Activated T-helper 1 cell treated with anti-CD3 and anti-CD28 coated beads, Interleukin-12 subunit alpha, Interleukin-12 subunit beta, Interleukin-2, Interleukin-4 antibody, amounts not matched to agents 30 ng/mL and 10 ng/mL and 1 ng/mL, durations not matched to agents 14 hours and 24 hours and 36 hours (primary cell): ENCODE measurements at regions of chr3 and their contacts with region 1.

Region 1: GRCh38 chr3:48716982-48717746 is at the start of gene IP6K2:
- DNase-seq: peak; percentile 98
- H3K4me3 Mint-ChIP-seq: peak within 1 kb of the TSS; percentile 98
- H3K27ac Mint-ChIP-seq: peak within 1 kb of the TSS; percentile 94
- H3K4me1 Mint-ChIP-seq: peaks cover 29% of the 10 kb centered on the region
- H3K27me3 Mint-ChIP-seq: peaks cover 17% of the 10 kb centered on the region
- total RNA-seq, gene IP6K2: 59.9 and 61.0 TPM in 2 replicates

Region 2: DNA sequence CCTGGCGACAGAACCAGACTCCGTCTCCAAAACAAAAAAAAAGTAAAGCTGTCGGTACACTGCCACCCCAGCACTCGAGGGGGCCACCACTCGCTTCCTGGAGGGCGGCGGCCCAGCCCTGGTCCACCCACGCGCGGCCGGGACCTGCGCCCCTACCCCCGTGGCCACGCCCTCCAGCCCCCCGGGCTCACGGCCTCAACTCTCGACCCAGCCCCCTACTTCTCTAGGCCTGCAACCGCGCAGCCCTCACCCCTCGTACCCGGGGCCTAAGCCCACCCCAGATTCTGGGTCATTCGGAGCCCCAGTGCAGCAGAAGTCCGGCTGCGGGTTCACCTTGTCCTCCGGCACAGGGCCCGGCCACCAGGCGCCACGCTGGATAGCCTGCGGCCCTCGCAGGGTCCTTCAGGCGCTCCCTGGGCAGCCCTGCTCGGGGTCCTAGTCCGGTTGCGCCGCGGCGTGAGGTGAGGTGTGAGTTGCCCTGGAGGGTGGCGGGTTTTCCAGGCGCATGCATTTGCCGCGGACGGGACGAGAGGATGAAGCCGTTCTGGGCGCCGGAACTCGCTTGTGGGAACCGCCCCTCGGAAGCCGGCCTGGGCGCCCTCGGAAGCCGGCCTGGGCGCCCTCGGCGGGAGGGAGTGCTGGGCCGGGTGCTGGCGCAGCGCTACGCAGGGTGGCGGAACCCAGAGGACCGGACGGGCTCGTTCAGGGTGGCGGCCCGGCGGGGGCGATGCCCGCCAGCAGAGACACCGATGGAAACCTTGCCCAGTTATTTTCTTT is 416.0 kb before region 1 on chr3:
- intact Hi-C with region 1: loop called (anchors 1 kb)
- DNase-seq: peak; percentile 87
- H3K4me3 Mint-ChIP-seq: peak within 1 kb of the TSS; percentile 95
- H3K27ac Mint-ChIP-seq: peak within 1 kb of the TSS; percentile 98
- H3K4me1 Mint-ChIP-seq: peaks cover 52% of the 10 kb centered on the region
- H3K27me3 Mint-ChIP-seq: peaks cover 11% of the 10 kb centered on the region

Region 3: GRCh38 chr3:48663415-48664312 is 53.5 kb before region 1 on chr3:
- intact Hi-C with region 1: loop called (anchors 1 kb)
- DNase-seq: peak; percentile 92
- H3K4me3 Mint-ChIP-seq: peak overlapping the region; percentile 95
- H3K27ac Mint-ChIP-seq: peak overlapping the region; percentile 96
- H3K4me1 Mint-ChIP-seq: peaks cover 15% of the 10 kb centered on the region
- H3K27me3 Mint-ChIP-seq: peaks cover 15% of the 10 kb centered on the region

Region 4: GRCh38 chr3:48685602-48686511 is 31.3 kb before region 1 on chr3 and contains the start of gene NCKIPSD:
- intact Hi-C with region 1: loop called (anchors 1 kb)
- DNase-seq: peak; percentile 85
- H3K4me3 Mint-ChIP-seq: peak within 1 kb of the TSS; percentile 97
- H3K27ac Mint-ChIP-seq: peak within 1 kb of the TSS; percentile 95
- H3K4me1 Mint-ChIP-seq: peaks cover 38% of the 10 kb centered on the region
- H3K27me3 Mint-ChIP-seq: no peaks in the 10 kb centered on the region
- total RNA-seq, gene NCKIPSD: 40.8 and 45.5 TPM in 2 replicates

Region 5: GRCh38 chr3:48765376-48765775 is 48.2 kb after region 1 on chr3:
- intact Hi-C with region 1: no loop called
- DNase-seq: no peak
- H3K4me3 Mint-ChIP-seq: no peak overlapping the region
- H3K27ac Mint-ChIP-seq: no peak overlapping the region
- H3K4me1 Mint-ChIP-seq: no peaks in the 10 kb centered on the region
- H3K27me3 Mint-ChIP-seq: no peaks in the 10 kb centered on the region

Region 6: DNA sequence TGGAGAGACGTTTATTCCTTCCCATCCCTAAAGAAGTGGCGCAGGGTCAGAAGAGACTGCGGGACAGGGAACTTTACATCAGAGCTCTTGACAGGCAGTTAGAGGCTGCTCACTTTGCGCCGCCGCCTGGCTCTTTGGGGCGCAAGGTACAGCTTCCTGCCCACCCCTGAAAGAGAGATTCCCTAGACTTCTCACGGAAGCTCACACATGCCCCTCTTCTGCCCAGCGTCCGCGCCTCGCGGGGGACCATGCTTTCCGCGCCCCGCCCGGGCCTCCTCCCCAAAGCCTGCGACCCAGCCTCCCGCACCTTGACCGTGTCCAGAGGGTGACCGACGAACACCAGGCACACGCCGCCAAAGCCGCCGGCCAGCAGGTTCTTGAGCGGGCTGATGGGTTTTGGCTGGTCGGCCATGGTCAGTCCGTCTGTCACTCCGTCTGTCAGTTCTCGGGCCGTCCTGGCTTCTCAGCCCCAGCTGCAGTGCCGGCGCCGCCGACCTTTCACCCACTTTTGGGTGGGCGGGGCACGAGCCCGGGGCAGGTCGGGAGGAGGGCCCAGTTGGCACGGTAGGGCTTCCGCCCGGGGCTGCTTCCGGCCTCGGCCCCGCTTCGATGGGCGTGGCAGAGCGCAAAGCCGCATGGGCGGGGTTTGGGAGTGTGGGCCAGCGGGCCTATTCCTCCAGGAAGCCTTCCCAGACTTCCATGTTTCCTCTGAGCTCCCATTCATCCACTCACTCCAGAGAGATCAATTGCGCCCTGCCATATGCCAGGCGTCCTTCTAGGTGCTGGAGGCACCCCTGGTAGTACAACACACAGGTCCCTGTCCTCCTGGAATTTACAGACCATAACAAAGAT is 181.4 kb after region 1 on chr3 and contains the start of gene SLC25A20:
- intact Hi-C with region 1: loop called (anchors 1 kb)
- DNase-seq: peak; percentile 92
- H3K4me3 Mint-ChIP-seq: peak within 1 kb of the TSS; percentile 94
- H3K27ac Mint-ChIP-seq: peak within 1 kb of the TSS; percentile 95
- H3K4me1 Mint-ChIP-seq: peaks cover 29% of the 10 kb centered on the region
- H3K27me3 Mint-ChIP-seq: no peaks in the 10 kb centered on the region
- total RNA-seq, gene SLC25A20: 15.9 and 17.4 TPM in 2 replicates

Region 7: GRCh38 chr3:49028673-49029562 is 311.8 kb after region 1 on chr3 and contains the start of gene IMPDH2:
- intact Hi-C with region 1: loop called (anchors 5 kb)
- DNase-seq: peak; percentile 92
- H3K4me3 Mint-ChIP-seq: peak within 1 kb of the TSS; percentile 93
- H3K27ac Mint-ChIP-seq: peak within 1 kb of the TSS; percentile 90
- H3K4me1 Mint-ChIP-seq: peaks cover 50% of the 10 kb centered on the region
- H3K27me3 Mint-ChIP-seq: no peaks in the 10 kb centered on the region
- total RNA-seq, gene IMPDH2: 423 and 434 TPM in 2 replicates

Region 8: GRCh38 chr3:49120438-49121131 is 403.4 kb after region 1 on chr3 and contains the start of gene USP19:
- intact Hi-C with region 1: loop called (anchors 1 kb)
- DNase-seq: peak; percentile 94
- H3K4me3 Mint-ChIP-seq: peak within 1 kb of the TSS; percentile 90
- H3K27ac Mint-ChIP-seq: peak within 1 kb of the TSS; percentile 88
- H3K4me1 Mint-ChIP-seq: peaks cover 10% of the 10 kb centered on the region
- H3K27me3 Mint-ChIP-seq: peaks cover 1% of the 10 kb centered on the region
- total RNA-seq, gene USP19: 57.7 and 59.7 TPM in 2 replicates